Left colon (tissue), 2 donors: ENCODE measurements at regions of chr19 and their contacts with region 1.

Region 1: DNA sequence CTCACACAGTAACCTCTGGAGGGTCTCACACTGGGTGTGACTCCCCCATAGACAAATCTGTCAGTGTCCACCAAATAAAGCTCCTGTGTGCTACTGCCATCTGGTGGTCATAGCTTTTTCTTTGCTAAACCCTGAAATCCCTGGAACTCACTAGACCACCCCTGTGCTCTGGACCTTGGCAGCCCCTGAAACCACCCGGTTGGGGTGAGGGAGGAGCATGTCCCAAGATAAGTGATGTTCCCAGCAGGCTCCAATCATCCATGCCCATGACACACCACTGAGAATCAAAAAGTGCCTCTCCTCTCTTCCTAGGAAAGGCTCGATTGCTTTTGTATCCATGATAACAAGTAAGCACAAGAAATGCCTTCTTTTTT is 6.5 kb upstream of the HSD17B14 start:
- DNase-seq: peak in 1 of 2 donors; percentile 35
- ATAC-seq: peak; percentile 23

Region 2: DNA sequence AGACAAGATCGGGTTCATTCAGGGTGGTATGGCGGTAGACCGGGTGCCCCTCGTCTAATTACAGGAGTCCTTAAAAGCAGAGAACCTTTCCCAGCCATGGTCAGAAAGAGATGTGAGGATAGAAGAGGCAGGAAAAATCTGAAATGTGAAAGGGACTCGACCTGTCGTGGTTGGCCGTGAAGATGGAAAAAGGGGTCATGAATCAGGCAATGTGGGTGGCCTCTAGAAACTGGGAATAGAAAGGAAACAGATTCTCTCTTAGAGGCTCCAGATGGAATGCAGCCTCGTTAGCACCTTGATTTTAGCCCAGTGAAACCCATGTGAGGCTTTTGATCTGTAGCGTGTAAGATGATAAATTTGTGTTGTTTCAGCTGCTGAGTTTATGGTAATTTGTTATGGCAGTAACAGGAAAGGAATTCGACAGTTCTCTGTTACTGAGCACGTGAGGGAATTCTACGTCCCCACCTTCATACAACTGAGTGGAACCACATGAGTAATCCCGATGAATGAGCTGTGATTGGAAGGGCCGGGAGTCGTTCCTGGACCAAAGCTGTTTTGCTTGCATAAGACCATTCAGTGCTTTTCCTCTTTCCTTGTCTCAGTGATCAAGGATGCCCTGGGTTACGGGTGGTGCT is 185.8 kb before region 1 on chr19:
- intact Hi-C with region 1: loop called in 1 of 2 experiments (anchors 10 kb)
- DNase-seq: no peak
- ATAC-seq: peak; percentile 47

Region 3: GRCh38 chr19:48698046-48698445 is 144.7 kb before region 1 on chr19:
- intact Hi-C with region 1: no loop called
- DNase-seq: peak; percentile 61 to 84
- ATAC-seq: peak; percentile 42

Region 4: DNA sequence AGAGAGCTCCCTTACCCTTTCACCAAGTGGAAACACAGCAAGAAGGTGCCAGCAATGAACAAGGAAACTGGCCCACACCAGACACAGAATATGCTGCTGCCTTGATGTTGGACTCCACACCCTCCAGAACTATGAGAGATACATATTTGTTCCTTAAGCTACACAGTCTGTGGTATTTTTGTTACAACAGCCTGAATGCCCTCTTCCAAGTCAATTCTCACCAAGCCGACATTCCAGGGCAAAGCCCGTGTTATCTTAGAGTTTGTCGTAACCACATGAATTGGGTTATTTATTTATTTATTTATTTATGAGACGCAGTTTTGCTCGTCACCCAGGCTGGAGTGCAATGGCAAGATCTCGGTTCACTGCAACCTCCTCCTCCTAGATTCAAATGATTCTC is 72.5 kb before region 1 on chr19:
- intact Hi-C with region 1: no loop called
- DNase-seq: no peak
- ATAC-seq: no peak

Region 5: GRCh38 chr19:48780631-48781391 is 62.0 kb before region 1 on chr19:
- intact Hi-C with region 1: loop called (anchors 2 to 5 kb)
- DNase-seq: no peak
- ATAC-seq: peak; percentile 43